ENCODE measurements at regions of chr15 and their contacts with region 1.

Region 1: DNA sequence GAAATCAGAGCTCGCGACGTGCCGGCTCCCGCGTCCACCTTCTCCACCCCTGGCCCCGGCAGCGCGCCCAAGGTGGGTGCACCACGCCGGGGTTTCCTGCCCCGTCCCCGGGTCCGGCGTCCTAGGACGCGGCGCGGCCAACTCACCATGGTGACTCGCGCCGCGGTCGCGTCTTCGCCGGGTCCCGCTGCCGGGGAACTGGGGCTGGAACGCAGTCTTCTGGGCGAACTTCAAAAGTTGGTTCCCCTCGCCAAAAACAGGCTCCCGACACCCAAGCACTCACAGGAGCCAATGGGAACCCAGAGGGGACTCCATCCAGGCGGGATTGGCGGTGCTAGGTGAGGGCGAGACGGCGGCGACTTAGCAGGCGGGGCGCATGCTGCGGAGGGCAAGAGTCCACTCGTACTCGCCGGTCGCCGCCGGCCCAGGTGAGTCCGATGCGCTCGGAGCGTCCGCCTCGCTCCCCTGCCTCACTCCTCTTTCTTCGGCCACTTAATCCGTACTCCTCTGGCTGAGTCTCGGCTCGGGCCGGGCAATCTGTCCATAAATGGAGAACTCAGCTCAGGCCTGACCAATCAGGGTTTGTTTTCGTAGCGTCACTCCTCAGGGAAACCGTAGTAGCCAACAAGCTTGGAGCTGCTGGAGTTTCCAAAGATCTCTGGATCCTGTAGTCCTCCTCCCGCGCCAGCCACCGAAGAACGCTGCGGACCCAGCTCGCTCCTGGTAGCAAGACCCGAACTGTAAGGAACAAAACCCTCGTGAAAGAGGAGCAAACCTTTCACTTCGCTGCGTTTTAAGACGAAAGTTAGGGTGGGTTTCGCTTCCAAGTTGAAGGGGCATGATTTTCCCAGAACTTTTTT is at the start of gene MYO1E:
- DNase-seq: peak; percentile 98 to 100
- ATAC-seq: peak; percentile 92 to 95
- H3K4me3 ChIP-seq: peak within 1 kb of the TSS; percentile 96
- H3K27ac ChIP-seq: peak within 1 kb of the TSS; percentile 91 to 92
- H3K4me1 ChIP-seq: peaks cover 49% of the 10 kb centered on the region
- CTCF ChIP-seq: no peak
- EP300 ChIP-seq: no peak
- POLR2A ChIP-seq: peak; percentile 98
- RAD21 ChIP-seq: peak; percentile 18 to 39; a peak in 2 of 5 replicates
- polyA plus RNA-seq, gene MYO1E: 451 and 497 TPM in 2 replicates

Region 2: DNA sequence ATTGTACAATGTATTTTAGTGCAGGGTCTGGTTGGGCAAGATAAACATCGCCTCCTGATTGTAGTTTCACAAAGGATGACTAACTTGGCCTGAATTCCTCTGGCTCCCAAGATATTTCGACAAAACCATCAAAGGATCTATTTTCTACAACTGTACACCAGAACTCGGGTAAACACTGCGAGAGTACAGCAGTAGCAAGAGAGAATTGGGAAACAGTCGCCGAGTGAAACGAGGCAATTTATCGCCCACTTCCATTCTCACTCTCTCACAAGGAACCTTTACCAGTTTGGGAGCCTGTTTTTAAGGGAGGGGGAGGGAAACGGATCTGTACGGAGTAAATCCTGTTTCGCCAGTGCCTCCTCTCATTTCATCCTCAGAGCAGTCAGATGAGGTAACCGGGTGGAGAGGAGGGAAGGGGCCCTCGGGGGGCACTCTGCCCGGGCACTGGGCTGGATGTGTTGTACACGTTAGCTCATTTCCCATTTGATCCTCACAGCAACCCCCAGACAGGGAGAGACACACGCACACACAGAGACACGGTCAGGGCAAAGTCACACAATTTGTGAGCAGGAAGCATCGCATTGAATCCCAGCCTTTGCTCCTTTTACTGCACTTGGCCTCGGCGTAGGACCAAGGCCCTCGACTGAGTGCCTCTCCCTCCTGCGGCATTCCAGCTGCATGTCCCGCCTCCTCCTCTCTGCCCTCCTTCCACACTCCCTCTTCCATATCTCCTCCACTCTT is 820.6 kb before region 1 on chr15:
- CTCF ChIA-PET with region 1: no interaction called
- POLR2A ChIA-PET with region 1: no interaction called
- DNase-seq: no peak
- ATAC-seq: no peak
- H3K4me3 ChIP-seq: no peak overlapping the region
- H3K27ac ChIP-seq: peak overlapping the region; percentile 54 to 62; a peak in 5 of 6 replicates
- H3K4me1 ChIP-seq: peaks cover 41% of the 10 kb centered on the region
- CTCF ChIP-seq: no peak
- EP300 ChIP-seq: peak in 1 of 2 experiments; percentile 40; a peak in 1 of 5 replicates
- POLR2A ChIP-seq: no peak
- RAD21 ChIP-seq: peak in 1 of 2 experiments; percentile 25; a peak in 1 of 5 replicates

Region 3: GRCh38 chr15:59283717-59284336 is 88.8 kb before region 1 on chr15:
- CTCF ChIA-PET with region 1: interaction called, 5 read pairs
- POLR2A ChIA-PET with region 1: interaction called, 15 read pairs
- DNase-seq: peak; percentile 99
- ATAC-seq: peak; percentile 91
- H3K4me3 ChIP-seq: 0 out of 3 replicates have a peak overlapping the region, but pooled peaks have one; percentile 8
- H3K27ac ChIP-seq: peak overlapping the region; percentile 93
- H3K4me1 ChIP-seq: peaks cover 84% of the 10 kb centered on the region
- CTCF ChIP-seq: no peak
- EP300 ChIP-seq: peak; percentile 98 to 99
- POLR2A ChIP-seq: peak; percentile 36
- RAD21 ChIP-seq: peak; percentile 43 to 81

Region 4: GRCh38 chr15:59299929-59300617 is 72.5 kb before region 1 on chr15:
- CTCF ChIA-PET with region 1: interaction called, 3 read pairs
- POLR2A ChIA-PET with region 1: interaction called, 14 read pairs
- DNase-seq: peak; percentile 91 to 97
- ATAC-seq: peak; percentile 84 to 87
- H3K4me3 ChIP-seq: peak overlapping the region; percentile 18
- H3K27ac ChIP-seq: peak overlapping the region; percentile 93 to 95
- H3K4me1 ChIP-seq: peaks cover 100% of the 10 kb centered on the region
- CTCF ChIP-seq: no peak
- EP300 ChIP-seq: peak; percentile 67 to 82; a peak in 3 of 5 replicates
- POLR2A ChIP-seq: no peak; the same call in 1 of the 2 replicates
- RAD21 ChIP-seq: peak; percentile 17 to 46; a peak in 4 of 5 replicates

Region 5: GRCh38 chr15:59396679-59397078 is 24.1 kb after region 1 on chr15:
- CTCF ChIA-PET with region 1: interaction called, 13 read pairs
- POLR2A ChIA-PET with region 1: interaction called, 3 read pairs
- DNase-seq: no peak
- ATAC-seq: peak in 1 of 2 experiments; percentile 56; a peak in 3 of 6 replicates
- H3K4me3 ChIP-seq: no peak overlapping the region
- H3K27ac ChIP-seq: peak overlapping the region; percentile 29 to 49; a peak in 5 of 6 replicates
- H3K4me1 ChIP-seq: peaks cover 14% of the 10 kb centered on the region
- CTCF ChIP-seq: no peak; the same call in 2 of the 3 replicates
- EP300 ChIP-seq: no peak
- POLR2A ChIP-seq: no peak
- RAD21 ChIP-seq: peak; percentile 30 to 34; a peak in 2 of 5 replicates

Region 6: GRCh38 chr15:59410391-59410896 is 37.9 kb after region 1 on chr15:
- CTCF ChIA-PET with region 1: interaction called, 13 read pairs
- POLR2A ChIA-PET with region 1: interaction called, 3 read pairs
- DNase-seq: peak; percentile 58 to 75
- ATAC-seq: peak; percentile 63 to 73; a peak in 5 of 6 replicates
- H3K4me3 ChIP-seq: no peak overlapping the region
- H3K27ac ChIP-seq: peak overlapping the region; percentile 73 to 84
- H3K4me1 ChIP-seq: peaks cover 44% of the 10 kb centered on the region
- CTCF ChIP-seq: no peak
- EP300 ChIP-seq: no peak; a peak in 1 of 5 replicates
- POLR2A ChIP-seq: no peak
- RAD21 ChIP-seq: no peak

Region 7: DNA sequence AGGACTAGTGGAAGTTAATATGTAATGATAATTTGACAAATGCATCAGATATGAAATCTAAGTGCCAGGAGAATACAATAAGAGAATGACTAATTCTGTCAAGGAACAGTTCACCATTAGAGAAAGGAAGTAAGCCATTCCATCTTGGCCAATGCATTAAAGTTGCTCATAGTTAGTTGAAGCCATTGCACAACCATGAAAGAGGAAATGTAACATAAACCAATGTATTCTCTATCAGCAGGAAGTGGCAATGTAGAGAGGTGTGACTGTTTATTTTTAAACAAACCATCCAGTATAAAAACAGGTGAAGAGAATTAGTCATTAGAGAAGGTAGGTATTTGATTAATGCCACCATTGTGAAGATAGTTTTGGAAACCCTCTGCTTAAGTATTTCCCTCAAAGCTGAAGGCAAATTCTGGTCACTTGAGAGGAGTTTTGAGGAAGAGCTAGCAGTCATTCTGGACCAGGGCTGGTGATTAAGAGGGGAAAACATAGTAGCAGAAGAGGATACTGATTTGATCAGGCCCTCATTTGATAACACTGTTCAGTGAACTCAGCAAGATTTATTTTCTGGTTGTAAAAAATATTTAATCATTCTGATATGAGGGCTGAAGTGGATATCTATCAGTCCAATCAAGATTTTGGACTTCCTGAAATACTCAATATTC is 1036.0 kb after region 1 on chr15:
- CTCF ChIA-PET with region 1: no interaction called
- POLR2A ChIA-PET with region 1: no interaction called
- DNase-seq: peak; percentile 86 to 92
- ATAC-seq: peak; percentile 81 to 85
- H3K4me3 ChIP-seq: no peak overlapping the region
- H3K27ac ChIP-seq: peak overlapping the region; percentile 90
- H3K4me1 ChIP-seq: peaks cover 59% of the 10 kb centered on the region
- CTCF ChIP-seq: no peak
- EP300 ChIP-seq: peak; percentile 82 to 90; a peak in 3 of 5 replicates
- POLR2A ChIP-seq: no peak
- RAD21 ChIP-seq: peak in 1 of 2 experiments; percentile 29; a peak in 3 of 5 replicates

Measured in A549 (cell line).